ENCODE measurements at regions of chr6 and their contacts with region 1.

Region 1: GRCh38 chr6:7276199-7276524 is 36.8 kb downstream of the SSR1 start:
- DNase-seq: no peak
- ATAC-seq: no peak
- H3K4me3 ChIP-seq: no peak overlapping the region
- H3K27ac ChIP-seq: no peak overlapping the region
- H3K4me1 ChIP-seq: peaks cover 24% of the 10 kb centered on the region
- H3K27me3 ChIP-seq: no peaks in the 10 kb centered on the region
- CTCF ChIP-seq: no peak
- EP300 ChIP-seq: no peak
- POLR2A ChIP-seq: no peak
- RAD21 ChIP-seq: no peak

Region 2: DNA sequence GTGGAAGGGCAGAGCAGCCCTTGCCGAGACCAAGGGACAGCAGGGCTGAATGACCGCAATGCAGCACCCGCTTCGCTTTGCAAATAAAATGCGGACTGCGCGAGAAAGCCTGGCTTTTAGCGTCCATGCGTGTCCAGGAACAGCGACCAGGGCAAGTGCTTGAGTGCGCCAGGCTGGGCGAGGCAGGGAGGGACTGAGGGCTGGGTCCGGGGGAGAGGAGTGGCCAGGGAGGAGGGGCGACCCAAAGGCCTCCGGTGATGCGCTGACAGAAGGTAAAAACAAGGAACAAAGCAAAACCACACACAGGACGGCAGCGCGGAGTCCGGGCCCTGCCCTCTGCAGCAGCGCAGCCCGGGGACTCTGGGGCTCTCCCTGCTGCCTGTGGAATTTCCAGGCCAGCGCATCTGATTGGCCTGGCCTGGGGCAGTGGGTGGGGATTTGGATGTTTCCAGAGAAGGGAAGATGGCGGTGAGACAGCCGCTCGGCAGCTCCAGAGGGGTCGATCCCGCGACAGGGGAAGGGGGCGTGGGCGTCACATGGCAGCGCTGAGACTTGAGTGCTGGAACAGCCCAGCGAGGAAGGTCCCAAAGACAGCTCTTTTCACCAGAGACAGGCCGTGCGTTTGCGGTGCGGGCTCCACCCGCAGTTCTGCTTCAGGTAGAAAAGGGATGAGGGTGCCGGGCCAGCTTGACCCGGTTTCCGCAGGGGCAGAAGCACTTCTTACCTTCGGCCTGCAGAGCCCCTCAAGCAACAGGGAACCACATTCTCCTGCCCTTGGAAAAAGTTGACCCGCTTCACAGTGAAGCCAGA is 14.9 kb before region 1 on chr6:
- CTCF ChIA-PET with region 1: interaction called, 14 read pairs
- POLR2A ChIA-PET with region 1: no interaction called
- RAD21 ChIA-PET with region 1: interaction called, 4 read pairs
- SMC1A ChIA-PET with region 1: interaction called, 4 read pairs
- in situ Hi-C with region 1: no loop called
- intact Hi-C with region 1: no loop called
- DNase-seq: no peak
- ATAC-seq: peak; percentile 91
- H3K4me3 ChIP-seq: peak overlapping the region; percentile 71
- H3K27ac ChIP-seq: no peak overlapping the region
- H3K4me1 ChIP-seq: peaks cover 9% of the 10 kb centered on the region
- H3K27me3 ChIP-seq: 0 out of 4 replicates have a peak, but pooled peaks cover 0 to 4% of the 10 kb centered on the region in 2 experiments
- CTCF ChIP-seq: no peak
- EP300 ChIP-seq: no peak
- POLR2A ChIP-seq: no peak
- RAD21 ChIP-seq: no peak

Region 3: DNA sequence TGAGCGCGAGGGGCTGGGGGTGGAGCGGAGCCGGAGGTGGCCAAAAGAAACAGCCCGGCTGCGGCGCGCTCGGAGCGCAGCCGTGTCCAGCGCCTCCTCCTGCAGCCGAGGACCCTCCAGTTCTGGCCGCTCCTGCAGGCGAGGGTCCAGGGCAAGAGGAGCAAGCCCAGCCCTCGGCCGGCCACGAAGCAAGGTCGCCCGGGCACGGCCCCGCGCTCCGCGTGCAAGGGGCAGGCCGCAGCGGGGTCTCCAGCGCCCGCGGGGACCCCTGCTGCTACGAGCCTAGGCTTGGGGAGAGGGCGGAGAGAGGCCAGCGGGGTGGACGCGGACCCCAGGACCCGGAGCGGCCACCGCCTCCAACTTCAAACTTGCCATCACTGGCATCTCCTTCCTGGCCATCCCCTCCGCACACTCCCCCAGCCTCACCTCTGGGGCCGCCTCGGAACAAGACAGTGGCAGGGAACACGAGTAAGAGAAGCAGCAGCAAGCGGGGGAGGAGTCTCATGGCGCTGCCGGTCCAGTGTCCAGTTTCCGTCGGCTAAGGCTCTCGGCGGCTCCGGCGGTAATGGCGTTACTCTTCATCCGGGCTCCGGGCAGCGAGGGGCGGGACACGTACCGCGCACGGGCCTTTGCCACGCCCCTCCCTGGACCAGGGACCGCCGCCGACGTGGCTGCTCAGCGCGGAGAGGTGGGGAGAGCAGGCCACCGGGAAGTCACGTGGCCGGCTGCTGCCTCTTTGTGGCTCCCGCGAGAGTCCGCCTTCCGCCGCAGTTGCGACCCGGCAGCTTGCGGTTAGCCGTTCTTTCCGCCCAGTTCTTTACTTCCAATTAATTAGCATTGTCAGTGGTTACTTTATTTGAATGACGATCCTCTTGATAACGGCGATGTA is 36.7 kb after region 1 on chr6 and contains the start of gene SSR1:
- CTCF ChIA-PET with region 1: interaction called, 15 read pairs
- POLR2A ChIA-PET with region 1: interaction called, 14 read pairs
- RAD21 ChIA-PET with region 1: interaction called, 14 read pairs
- SMC1A ChIA-PET with region 1: interaction called, 16 read pairs
- in situ Hi-C with region 1: no loop called
- intact Hi-C with region 1: no loop called
- DNase-seq: peak; percentile 85
- ATAC-seq: peak; percentile 99
- H3K4me3 ChIP-seq: peak within 1 kb of the TSS; percentile 95
- H3K27ac ChIP-seq: peak within 1 kb of the TSS; percentile 82
- H3K4me1 ChIP-seq: peaks cover 6% of the 10 kb centered on the region
- H3K27me3 ChIP-seq: no peaks in the 10 kb centered on the region
- CTCF ChIP-seq: no peak
- EP300 ChIP-seq: no peak
- POLR2A ChIP-seq: peak; percentile 96
- RAD21 ChIP-seq: no peak
- polyA plus RNA-seq, gene SSR1: 123 to 151 TPM

Region 4: DNA sequence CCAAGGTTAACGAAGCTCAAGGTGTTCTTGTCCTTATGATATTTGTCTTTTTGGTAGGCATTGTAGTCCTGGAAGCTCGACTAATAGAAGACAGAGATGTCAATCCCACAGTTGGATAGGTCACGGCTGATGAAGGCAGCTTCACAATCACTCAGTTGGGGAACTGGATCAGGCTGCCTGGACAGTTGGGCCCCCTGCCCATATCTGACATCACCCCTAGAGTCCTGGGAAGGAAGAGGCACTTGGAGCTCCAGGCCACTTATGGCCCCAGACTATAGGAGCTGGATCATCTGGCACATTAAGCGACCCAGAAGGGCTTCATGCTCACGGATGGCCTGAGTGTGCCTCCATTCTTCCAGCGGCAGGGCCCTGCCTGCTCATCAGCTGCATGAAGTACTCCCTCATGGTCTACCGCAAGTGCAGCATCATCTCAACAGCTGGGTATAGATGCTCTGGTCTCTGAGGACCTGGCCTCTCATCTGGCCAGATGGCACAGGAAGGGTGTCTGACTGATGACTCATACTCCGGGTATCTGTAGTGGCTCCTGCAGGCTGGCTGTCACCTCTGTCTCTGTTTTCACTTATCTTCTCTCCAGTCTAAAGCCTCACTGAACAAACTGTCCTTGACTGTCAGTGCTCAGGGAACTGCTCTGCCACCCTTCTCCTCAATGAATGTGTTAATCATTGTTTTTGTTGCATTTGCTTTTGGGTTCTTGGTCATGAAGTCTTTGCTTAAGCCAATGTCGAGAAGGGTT is 66.0 kb after region 1 on chr6:
- CTCF ChIA-PET with region 1: interaction called, 83 read pairs
- POLR2A ChIA-PET with region 1: interaction called, 3 read pairs
- RAD21 ChIA-PET with region 1: interaction called, 9 read pairs
- SMC1A ChIA-PET with region 1: interaction called, 30 read pairs
- in situ Hi-C with region 1: no loop called
- intact Hi-C with region 1: loop called (anchors 2 kb)
- DNase-seq: no peak
- ATAC-seq: peak; percentile 76
- H3K4me3 ChIP-seq: no peak overlapping the region
- H3K27ac ChIP-seq: no peak overlapping the region
- H3K4me1 ChIP-seq: no peaks in the 10 kb centered on the region
- H3K27me3 ChIP-seq: peaks cover 0 to 1% of the 10 kb centered on the region in 2 experiments; a peak in 2 of 4 replicates
- CTCF ChIP-seq: no peak
- EP300 ChIP-seq: no peak
- POLR2A ChIP-seq: no peak
- RAD21 ChIP-seq: no peak

Region 5: DNA sequence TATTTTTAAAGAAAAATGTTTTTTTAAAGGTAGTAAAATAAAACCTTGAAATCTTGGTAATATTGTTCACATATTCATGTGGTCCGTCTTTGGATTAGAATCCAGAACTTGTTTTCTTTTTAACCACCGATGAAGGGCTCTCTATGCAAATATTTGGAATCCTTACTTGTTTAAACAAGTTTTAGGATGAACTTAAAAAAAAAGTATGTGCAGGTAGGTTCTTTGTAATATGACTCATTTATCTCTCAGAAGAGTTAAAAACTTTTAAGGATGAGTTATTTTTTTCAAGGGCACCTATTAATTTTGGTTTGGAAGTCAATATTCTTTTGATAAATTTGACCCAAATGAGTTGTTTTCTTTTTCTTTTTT is 274.3 kb after region 1 on chr6:
- CTCF ChIA-PET with region 1: no interaction called
- POLR2A ChIA-PET with region 1: no interaction called
- RAD21 ChIA-PET with region 1: no interaction called
- SMC1A ChIA-PET with region 1: no interaction called
- in situ Hi-C with region 1: no loop called
- intact Hi-C with region 1: no loop called
- DNase-seq: no peak
- ATAC-seq: no peak
- H3K4me3 ChIP-seq: no peak overlapping the region
- H3K27ac ChIP-seq: no peak overlapping the region
- H3K4me1 ChIP-seq: no peaks in the 10 kb centered on the region
- H3K27me3 ChIP-seq: peaks cover 3 to 7% of the 10 kb centered on the region in 2 experiments; a peak in 3 of 4 replicates
- CTCF ChIP-seq: no peak
- EP300 ChIP-seq: no peak
- POLR2A ChIP-seq: no peak
- RAD21 ChIP-seq: no peak

Region 6: DNA sequence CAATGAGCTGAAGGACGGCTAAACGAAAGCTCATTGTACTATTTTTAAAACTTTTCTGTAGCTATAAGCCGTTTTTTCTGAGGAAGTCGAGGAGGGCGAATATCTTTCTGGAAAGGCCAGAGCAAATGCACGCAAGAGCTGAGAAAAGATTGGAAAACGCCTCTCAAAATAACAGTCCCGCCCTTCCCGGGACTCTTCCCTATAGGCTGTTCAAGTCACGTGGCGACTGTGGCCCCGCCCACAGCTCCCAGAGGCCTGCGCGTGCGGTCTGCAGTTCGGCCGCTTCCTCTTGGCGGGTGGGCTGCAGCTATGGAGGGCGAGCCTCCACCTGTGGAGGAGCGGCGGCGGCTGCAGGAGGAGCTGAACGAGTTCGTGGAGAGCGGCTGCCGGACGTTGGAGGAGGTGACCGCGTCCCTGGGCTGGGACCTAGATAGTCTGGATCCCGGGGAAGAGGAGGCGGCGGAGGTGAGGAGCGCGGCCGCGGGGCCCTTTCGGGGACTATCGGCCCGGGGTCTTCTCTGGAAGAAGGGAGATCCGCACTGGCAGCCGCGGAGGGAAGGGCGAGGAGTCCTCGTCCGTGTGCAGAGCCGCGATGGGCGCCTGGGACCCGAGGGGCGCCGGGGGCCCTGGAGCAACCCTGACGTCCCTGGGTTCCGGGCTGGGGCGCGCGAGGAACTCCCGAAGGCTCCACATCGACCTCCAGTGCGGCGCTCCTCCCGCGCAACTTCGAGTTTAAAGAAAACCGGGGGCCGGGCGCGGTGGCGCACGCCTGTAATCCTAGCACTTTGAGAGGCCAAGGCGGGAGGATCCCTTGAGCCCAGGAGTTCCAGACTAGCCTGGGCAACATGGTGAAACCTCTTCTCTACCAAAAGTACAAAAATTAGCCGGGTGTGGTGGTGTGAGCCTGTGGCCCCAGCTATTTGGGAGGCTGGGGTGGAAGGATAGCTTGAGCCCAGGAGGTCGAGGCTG is 314.1 kb after region 1 on chr6 and contains the start of gene SNRNP48:
- CTCF ChIA-PET with region 1: interaction called, 6 read pairs
- POLR2A ChIA-PET with region 1: interaction called, 6 read pairs
- RAD21 ChIA-PET with region 1: interaction called, 9 read pairs
- SMC1A ChIA-PET with region 1: interaction called, 10 read pairs
- in situ Hi-C with region 1: no loop called
- intact Hi-C with region 1: no loop called
- DNase-seq: peak; percentile 73
- ATAC-seq: peak; percentile 100
- H3K4me3 ChIP-seq: peak within 1 kb of the TSS; percentile 73
- H3K27ac ChIP-seq: peak within 1 kb of the TSS; percentile 55
- H3K4me1 ChIP-seq: peaks cover 3% of the 10 kb centered on the region; the same call in 1 of the 2 replicates
- H3K27me3 ChIP-seq: no peaks in the 10 kb centered on the region
- CTCF ChIP-seq: no peak
- EP300 ChIP-seq: no peak
- POLR2A ChIP-seq: peak; percentile 95
- RAD21 ChIP-seq: no peak
- polyA plus RNA-seq, gene SNRNP48: 3.2 to 5.0 TPM

Region 7: DNA sequence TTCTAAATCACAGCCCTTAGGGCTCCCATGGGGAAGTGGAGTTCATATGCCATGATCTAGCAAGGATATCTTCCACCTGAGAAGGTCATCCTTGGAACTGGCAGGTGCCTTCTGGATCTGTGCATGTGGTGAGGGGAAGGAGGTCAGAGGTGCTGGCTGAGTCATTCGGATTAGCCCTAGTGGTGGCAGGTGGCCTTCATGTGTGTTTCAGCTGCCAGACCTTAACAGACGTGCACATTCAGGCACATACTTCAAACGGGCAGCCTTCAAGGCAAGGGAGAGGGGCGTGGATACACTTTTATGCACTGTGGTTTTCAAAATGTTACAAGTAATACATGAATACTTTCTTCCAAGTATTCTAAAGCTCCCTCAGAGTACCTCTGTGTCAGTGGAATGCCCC is 500.9 kb after region 1 on chr6:
- CTCF ChIA-PET with region 1: no interaction called
- POLR2A ChIA-PET with region 1: no interaction called
- RAD21 ChIA-PET with region 1: no interaction called
- SMC1A ChIA-PET with region 1: no interaction called
- in situ Hi-C with region 1: no loop called
- intact Hi-C with region 1: no loop called
- DNase-seq: no peak
- ATAC-seq: no peak
- H3K4me3 ChIP-seq: no peak overlapping the region
- H3K27ac ChIP-seq: no peak overlapping the region
- H3K4me1 ChIP-seq: no peaks in the 10 kb centered on the region
- H3K27me3 ChIP-seq: no peaks in the 10 kb centered on the region; a peak in 2 of 4 replicates
- CTCF ChIP-seq: no peak
- EP300 ChIP-seq: no peak
- POLR2A ChIP-seq: no peak
- RAD21 ChIP-seq: no peak